ENCODE measurements at regions of chr20 and their contacts with region 1.

Region 1: DNA sequence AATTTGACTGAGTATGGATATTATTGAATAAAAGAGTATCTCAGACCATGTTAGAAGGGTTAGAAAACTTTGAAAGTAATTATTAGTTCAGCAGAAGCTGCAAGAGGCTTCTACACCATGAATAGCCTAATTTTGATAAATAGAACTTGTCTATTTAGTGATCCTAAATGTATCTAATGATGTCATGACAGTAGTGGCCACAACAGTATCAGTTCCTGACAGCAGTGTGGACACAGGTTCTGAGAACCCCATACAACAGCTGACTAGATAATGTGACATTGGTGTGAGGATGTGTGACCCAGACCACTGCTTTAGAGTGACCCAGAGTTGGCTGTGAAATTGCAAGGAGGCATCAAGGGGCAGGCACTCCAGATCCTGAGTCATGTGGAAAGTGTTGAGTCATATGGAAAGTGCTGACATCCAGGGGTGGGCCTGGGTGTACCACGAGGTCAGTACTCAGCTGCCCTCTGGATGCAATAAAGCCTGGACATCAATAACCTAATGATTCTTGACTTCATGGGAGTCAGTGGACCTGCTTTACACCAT is 754.7 kb downstream of the DHX35 start:
- DNase-seq: no peak
- H3K4me3 ChIP-seq: no peak overlapping the region
- H3K27ac ChIP-seq: no peak overlapping the region
- H3K4me1 ChIP-seq: no peaks in the 10 kb centered on the region
- H3K27me3 ChIP-seq: no peaks in the 10 kb centered on the region
- CTCF ChIP-seq: no peak
- EP300 ChIP-seq: no peak
- POLR2A ChIP-seq: no peak

Region 2: GRCh38 chr20:39605918-39606317 is 111.0 kb before region 1 on chr20:
- intact Hi-C with region 1: no loop called
- DNase-seq: no peak
- H3K4me3 ChIP-seq: no peak overlapping the region
- H3K27ac ChIP-seq: no peak overlapping the region
- H3K4me1 ChIP-seq: no peaks in the 10 kb centered on the region
- H3K27me3 ChIP-seq: no peaks in the 10 kb centered on the region
- CTCF ChIP-seq: no peak
- EP300 ChIP-seq: no peak
- POLR2A ChIP-seq: no peak

Region 3: DNA sequence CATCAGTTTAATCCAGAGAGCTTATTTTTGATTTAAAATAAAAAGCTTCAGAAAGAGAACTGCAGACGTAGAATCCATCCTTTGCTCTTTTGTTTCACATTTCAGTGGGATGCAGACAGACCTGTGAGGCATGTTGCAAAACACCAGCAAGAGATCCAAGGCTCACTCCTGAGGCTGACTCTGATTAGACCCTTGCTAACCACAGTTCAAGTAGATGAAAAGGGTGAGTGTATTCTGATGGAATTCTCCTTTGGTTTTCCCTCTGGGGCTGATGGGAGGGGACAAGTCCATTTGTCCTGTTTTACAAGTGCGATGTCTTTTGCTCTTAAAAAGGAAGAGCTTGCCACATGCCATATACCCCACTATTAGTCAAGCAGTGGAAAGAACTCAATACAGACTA is 199.4 kb after region 1 on chr20:
- intact Hi-C with region 1: no loop called
- DNase-seq: no peak
- H3K4me3 ChIP-seq: no peak overlapping the region
- H3K27ac ChIP-seq: no peak overlapping the region
- H3K4me1 ChIP-seq: no peaks in the 10 kb centered on the region
- H3K27me3 ChIP-seq: no peaks in the 10 kb centered on the region
- CTCF ChIP-seq: no peak
- EP300 ChIP-seq: no peak
- POLR2A ChIP-seq: no peak

Region 4: GRCh38 chr20:40134176-40134575 is 417.3 kb after region 1 on chr20:
- intact Hi-C with region 1: loop called in 1 of 4 experiments (anchors 5 kb)
- DNase-seq: no peak
- H3K4me3 ChIP-seq: no peak overlapping the region
- H3K27ac ChIP-seq: no peak overlapping the region
- H3K4me1 ChIP-seq: no peaks in the 10 kb centered on the region
- H3K27me3 ChIP-seq: no peaks in the 10 kb centered on the region
- CTCF ChIP-seq: no peak
- EP300 ChIP-seq: no peak
- POLR2A ChIP-seq: no peak

Measured in ovary (tissue), 10 donors.